H1 (cell line): ENCODE measurements at regions of chr2 and their contacts with region 1.

Region 1: GRCh38 chr2:169573160-169573973 is at the start of gene FASTKD1:
- DNase-seq: peak; percentile 68 to 88
- H3K4me3 ChIP-seq: peak within 1 kb of the TSS; percentile 85 to 90 (median 90)
- H3K27ac ChIP-seq: peak within 1 kb of the TSS; percentile 55
- H3K4me1 ChIP-seq: no peaks in the 10 kb centered on the region
- H3K27me3 ChIP-seq: no peaks in the 10 kb centered on the region
- CTCF ChIP-seq: no peak
- EP300 ChIP-seq: no peak
- POLR2A ChIP-seq: peak; percentile 60 to 81
- RAD21 ChIP-seq: no peak; a peak in 1 of 4 replicates
- total RNA-seq, gene FASTKD1: 69.2 and 70.8 TPM in 2 replicates

Region 2: DNA sequence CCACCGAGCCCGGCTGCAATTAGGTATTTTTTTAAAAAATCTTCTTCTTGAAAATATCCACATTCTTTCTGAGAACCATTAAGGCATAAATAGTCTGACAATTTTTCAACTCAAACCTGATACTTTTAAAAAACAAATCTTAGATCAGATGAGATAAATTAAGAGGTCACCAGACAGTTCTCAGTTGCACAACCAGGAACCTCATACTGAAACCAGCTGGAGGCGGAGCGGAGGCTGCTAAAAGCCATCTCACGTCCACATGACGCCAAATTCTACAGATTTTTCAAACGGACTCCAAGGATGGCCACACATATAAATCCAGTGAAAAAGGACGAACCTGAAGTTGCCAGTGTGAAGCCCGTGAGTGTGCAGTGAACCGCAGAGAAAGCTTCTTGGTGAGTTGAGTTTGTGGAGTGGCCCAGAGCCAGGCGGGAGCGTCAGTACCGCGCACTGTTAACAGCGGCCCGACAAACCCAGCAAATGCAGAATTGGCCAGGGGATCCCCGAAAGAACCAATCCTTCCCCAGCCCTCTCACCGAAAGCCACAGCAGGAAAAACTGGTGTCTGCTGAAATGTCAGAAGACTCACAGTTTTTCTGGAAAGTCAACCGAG is 147.2 kb before region 1 on chr2:
- CTCF ChIA-PET with region 1: no interaction called
- POLR2A ChIA-PET with region 1: no interaction called
- DNase-seq: no peak
- H3K4me3 ChIP-seq: no peak overlapping the region
- H3K27ac ChIP-seq: no peak overlapping the region
- H3K4me1 ChIP-seq: no peaks in the 10 kb centered on the region
- H3K27me3 ChIP-seq: no peaks in the 10 kb centered on the region
- CTCF ChIP-seq: no peak
- EP300 ChIP-seq: no peak
- POLR2A ChIP-seq: no peak
- RAD21 ChIP-seq: no peak

Region 3: DNA sequence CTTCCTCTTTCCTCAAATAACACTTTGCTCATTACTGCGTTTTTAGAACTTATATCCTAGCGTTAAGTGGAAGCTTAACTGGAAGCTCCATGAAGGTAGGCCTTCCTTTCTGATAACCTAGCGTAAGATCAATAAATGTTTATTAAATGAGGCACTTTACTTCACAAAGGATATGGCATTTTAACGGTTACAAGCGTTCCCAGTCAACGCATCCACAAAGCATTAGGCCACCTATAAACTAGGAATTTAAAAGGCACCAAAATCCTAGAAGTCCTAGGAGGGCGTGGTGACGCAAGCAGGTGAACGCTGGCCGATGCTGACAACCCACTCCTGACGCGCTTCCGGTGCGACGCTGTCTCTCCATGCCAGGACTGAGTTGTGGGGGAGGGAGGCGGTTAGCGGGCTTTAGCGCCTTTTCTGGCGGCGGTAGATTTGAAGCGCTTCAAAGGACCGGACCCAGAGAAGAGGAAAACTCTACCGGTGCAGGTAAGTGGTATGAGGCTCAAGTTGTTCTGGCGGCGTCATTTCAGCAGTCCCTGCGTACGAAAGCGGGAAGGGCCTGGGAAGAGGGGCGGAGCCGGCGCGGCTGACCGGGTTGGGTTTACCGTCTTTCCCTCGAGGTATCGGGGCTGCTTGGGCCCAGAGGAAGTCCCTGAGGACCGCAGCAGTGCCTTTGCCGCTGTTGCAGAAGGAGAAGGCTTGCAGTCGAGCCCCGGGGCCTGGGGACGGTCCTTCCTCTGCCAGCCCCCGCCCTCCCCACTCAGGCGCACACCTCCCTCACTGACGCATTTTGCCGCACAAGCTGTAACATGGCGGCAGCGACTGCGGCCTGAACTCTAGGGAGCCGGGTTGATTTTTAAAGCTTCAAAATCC is 10.9 kb after region 1 on chr2 and contains the start of gene PPIG:
- CTCF ChIA-PET with region 1: no interaction called
- POLR2A ChIA-PET with region 1: interaction called, 23 read pairs
- DNase-seq: peak; percentile 56 to 86
- H3K4me3 ChIP-seq: peak within 1 kb of the TSS; percentile 81 to 97 (median 94)
- H3K27ac ChIP-seq: peak within 1 kb of the TSS; percentile 96
- H3K4me1 ChIP-seq: no peaks in the 10 kb centered on the region; a peak in 3 of 7 replicates
- H3K27me3 ChIP-seq: no peaks in the 10 kb centered on the region
- CTCF ChIP-seq: no peak
- EP300 ChIP-seq: peak in 1 of 2 experiments; percentile 50; a peak in 1 of 3 replicates
- POLR2A ChIP-seq: peak in 1 of 2 experiments; percentile 93; a peak in 2 of 3 replicates
- RAD21 ChIP-seq: no peak
- total RNA-seq, gene PPIG: 65.7 and 71.0 TPM in 2 replicates